PC-3 (cell line): ENCODE measurements at regions of chr15 and their contacts with region 1.

Region 1: DNA sequence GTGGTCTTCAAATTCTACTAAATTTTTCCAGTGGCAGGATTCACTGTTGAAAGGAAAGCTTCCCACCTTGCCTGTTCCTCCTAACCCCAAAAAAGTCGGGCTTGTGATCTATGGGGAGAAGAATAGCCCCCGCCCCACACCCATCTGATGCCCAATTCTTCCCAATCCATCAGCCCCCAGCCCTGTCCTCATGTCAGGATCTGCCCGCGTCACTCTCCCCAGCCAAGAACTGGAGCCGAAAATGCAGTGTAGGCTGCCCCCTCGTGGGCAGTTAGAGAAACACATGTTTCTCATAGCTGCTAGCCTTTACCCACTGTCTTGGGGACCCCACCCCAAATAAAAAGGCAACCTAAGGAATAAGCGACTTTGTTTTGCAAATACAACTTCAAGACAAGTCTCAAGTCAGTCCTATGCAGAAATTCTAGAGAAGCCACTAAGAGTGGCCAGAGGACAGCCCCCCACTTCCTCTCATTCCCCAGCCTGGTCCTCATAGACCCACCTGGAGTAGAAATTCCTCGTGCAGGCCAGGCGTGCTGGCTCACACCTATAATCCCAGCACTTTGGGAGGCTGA is 13.0 kb upstream of the CSK start:
- DNase-seq: peak; percentile 64
- ATAC-seq: peak; percentile 58
- H3K4me3 ChIP-seq: peak overlapping the region; percentile 61
- H3K27ac ChIP-seq: no peak overlapping the region
- H3K4me1 ChIP-seq: no peaks in the 10 kb centered on the region
- H3K27me3 ChIP-seq: no peaks in the 10 kb centered on the region
- CTCF ChIP-seq: peak; percentile 89

Region 2: DNA sequence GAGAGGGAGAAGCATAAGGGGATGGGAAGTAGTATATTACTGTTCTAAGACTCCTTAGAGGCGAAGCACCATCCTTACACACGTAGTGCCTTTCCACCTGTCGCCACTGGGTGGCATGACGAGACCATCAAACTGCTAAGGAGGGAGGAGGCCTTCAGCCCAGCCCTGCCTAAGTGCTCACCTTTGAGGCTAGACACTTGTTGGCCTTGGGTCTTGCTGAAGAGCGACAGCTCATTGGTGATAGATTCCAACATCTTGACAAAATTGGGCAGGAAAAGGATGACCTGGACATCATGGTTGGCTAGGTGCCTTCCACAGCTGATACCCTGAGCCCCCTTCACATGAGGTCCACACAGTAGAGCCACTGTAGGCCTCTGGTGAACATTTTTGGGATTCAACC is 133.6 kb before region 1 on chr15:
- CTCF ChIA-PET with region 1: interaction called, 13 read pairs
- POLR2A ChIA-PET with region 1: no interaction called
- intact Hi-C with region 1: loop called (anchors 1 kb)
- DNase-seq: peak; percentile 81
- ATAC-seq: peak; percentile 79
- H3K4me3 ChIP-seq: no peak overlapping the region
- H3K27ac ChIP-seq: no peak overlapping the region
- H3K4me1 ChIP-seq: no peaks in the 10 kb centered on the region
- H3K27me3 ChIP-seq: no peaks in the 10 kb centered on the region
- CTCF ChIP-seq: peak; percentile 93

Region 3: DNA sequence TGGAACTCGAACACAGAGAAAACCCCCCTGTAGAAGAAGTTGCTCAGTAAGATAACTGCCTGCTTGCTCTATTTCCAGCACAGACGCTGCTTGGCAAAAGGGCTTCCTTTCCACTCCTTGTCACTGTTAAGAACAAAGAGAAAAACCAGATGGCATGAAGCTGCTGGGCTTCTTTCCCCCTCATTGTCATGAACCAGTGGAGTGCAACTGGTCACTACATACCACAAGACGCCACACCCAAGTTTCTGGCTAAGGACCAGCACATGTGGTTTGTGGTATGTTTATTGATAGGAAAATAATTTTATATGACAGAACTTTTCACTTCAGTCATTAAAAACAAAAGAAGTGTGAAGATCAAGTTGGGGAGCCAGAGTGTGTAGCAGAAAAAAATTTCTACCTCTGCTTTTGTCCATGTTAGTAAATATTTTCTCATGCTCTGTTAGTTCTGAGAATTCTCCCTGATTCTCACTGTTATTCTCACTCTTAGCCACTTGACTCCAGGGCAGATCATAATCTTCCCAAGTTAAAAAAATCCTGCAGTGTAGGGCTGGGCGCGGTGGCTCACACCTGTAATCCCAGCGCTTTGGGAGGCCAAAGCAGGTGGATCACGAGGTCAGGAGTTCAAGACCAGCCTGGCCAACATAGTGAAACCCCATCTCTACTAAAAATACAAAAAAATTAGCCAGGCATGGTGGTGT is 115.3 kb before region 1 on chr15:
- CTCF ChIA-PET with region 1: no interaction called
- POLR2A ChIA-PET with region 1: no interaction called
- intact Hi-C with region 1: loop called (anchors 5 kb)
- DNase-seq: peak; percentile 84
- ATAC-seq: peak; percentile 76
- H3K4me3 ChIP-seq: no peak overlapping the region
- H3K27ac ChIP-seq: peak overlapping the region; percentile 38
- H3K4me1 ChIP-seq: peaks cover 10% of the 10 kb centered on the region
- H3K27me3 ChIP-seq: no peaks in the 10 kb centered on the region
- CTCF ChIP-seq: no peak

Region 4: DNA sequence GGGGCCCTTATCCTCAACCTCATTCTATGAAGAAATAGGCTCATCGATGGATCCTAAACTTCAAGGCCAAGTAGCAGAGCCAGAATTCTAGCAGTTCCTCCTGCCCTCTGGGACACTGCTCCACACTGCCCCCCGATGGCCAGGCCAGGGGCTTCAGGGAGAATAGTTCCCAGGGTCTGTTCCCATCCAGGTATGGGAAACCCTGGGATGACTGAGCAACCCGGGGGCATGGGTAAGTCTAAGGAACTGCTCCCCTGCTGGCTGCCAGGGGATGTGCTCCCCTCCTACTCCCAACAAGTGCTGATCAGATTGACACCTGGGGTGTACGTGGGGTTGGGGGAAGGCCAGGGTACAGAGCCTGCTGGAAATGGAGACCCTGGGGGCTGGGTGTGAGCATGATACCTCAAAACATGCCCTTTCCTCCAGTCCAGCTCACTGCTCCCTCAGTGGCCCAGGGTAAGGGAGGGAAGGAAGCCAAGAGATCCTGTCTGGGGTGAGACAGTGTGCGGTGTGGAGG is 66.5 kb after region 1 on chr15:
- CTCF ChIA-PET with region 1: no interaction called
- POLR2A ChIA-PET with region 1: no interaction called
- intact Hi-C with region 1: loop called (anchors 1 kb)
- DNase-seq: peak; percentile 88
- ATAC-seq: peak; percentile 94
- H3K4me3 ChIP-seq: no peak overlapping the region
- H3K27ac ChIP-seq: no peak overlapping the region
- H3K4me1 ChIP-seq: no peaks in the 10 kb centered on the region
- H3K27me3 ChIP-seq: no peaks in the 10 kb centered on the region
- CTCF ChIP-seq: peak; percentile 96

Region 5: DNA sequence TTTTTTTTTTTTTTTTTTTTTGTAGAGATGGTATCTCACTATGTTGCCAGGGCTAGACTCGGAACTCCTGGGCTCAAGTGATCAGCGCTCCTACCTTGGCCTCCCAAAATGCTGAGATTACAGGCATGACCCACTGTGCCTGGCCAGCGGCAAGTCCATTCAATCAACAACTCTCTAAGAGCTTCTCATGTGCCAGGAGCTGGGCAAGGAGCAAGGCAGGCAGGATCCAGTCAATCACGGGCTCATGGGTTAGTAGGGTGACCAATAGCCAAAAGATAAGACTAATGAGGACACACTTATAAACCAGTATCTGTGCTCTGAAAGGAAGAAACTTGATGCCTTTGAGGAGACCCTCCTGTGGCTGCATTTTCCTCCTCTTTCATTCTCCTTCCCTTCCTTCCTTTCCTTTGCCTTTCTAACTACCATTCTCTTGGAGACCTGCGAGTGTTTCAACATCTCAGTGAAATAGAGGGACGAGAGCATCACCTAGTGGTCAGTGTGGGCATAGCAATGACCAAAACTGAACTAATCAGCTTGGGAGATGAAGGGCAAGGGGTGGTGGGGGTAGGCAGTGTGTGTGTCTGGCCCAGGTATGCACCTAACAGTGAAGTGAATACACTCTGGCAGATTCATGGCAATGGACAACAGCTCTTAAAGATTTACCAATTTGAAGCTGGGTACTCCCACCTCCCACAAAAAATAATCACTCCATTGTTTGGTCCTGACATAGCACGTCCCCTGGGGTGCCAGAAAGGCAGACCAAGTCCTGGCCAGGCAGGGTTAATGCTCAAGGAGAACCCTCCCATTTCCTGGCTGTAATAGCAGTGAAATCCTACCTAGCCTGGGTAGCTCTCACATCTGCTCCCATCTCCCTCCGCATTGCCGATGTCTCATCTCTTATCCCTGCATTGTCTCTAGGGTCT is 181.5 kb after region 1 on chr15:
- CTCF ChIA-PET with region 1: interaction called, 4 read pairs
- POLR2A ChIA-PET with region 1: no interaction called
- intact Hi-C with region 1: loop called (anchors 2 kb)
- DNase-seq: peak; percentile 90
- ATAC-seq: peak; percentile 79
- H3K4me3 ChIP-seq: no peak overlapping the region
- H3K27ac ChIP-seq: no peak overlapping the region
- H3K4me1 ChIP-seq: no peaks in the 10 kb centered on the region
- H3K27me3 ChIP-seq: no peaks in the 10 kb centered on the region
- CTCF ChIP-seq: peak; percentile 96

Region 6: GRCh38 chr15:74964794-74965193 is 195.9 kb after region 1 on chr15:
- CTCF ChIA-PET with region 1: no interaction called
- POLR2A ChIA-PET with region 1: interaction called, 10 read pairs
- intact Hi-C with region 1: no loop called
- DNase-seq: peak; percentile 67
- ATAC-seq: peak; percentile 66
- H3K4me3 ChIP-seq: no peak overlapping the region
- H3K27ac ChIP-seq: peak overlapping the region; percentile 28; the same call in 1 of the 2 replicates
- H3K4me1 ChIP-seq: peaks cover 11% of the 10 kb centered on the region
- H3K27me3 ChIP-seq: no peaks in the 10 kb centered on the region
- CTCF ChIP-seq: no peak